IMR-90 (cell line): ENCODE measurements at regions of chr6 and their contacts with region 1.

Region 1: DNA sequence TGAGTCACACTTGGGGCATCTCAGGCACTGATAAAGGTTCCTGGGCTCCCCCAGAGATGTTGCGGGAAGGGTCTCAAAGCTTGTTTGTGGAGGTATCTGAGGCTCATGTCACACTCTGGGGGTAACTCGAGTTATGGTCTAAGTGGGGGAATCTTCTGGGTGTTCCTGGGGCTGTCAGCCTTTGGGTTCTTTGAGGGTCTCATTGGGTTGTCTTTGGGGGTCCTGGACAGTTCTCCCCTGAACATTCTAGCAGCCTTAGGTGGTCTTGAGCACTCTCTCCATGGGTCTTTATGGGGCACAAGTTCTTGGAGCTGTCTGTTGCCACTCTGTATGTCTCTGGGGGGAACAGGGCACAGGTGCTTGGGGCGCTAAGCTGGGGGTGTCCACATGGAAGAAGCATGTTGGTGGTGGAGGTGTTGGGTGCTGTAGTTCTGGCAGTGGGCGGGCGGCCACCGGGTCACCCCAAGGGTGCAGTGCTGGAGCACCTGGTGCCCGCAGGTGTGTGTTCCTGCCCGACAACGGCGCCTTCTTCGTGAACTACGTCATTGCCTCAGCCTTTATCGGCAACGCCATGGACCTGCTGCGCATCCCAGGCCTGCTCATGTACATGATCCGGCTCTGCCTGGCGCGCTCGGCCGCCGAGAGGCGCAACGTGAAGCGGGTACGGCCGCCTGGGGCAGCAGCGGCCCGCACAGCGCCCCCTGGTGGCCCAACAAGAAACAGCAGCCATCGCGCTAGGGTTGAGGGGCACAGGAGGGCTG is 7.1 kb upstream of the CAPN11 start:
- DNase-seq: peak; percentile 62
- ATAC-seq: peak; percentile 94
- H3K4me3 ChIP-seq: no peak overlapping the region
- H3K27ac ChIP-seq: no peak overlapping the region
- H3K4me1 ChIP-seq: peaks cover 2% of the 10 kb centered on the region
- H3K27me3 ChIP-seq: no peaks in the 10 kb centered on the region
- CTCF ChIP-seq: peak; percentile 98
- POLR2A ChIP-seq: no peak
- RAD21 ChIP-seq: peak; percentile 84

Region 2: DNA sequence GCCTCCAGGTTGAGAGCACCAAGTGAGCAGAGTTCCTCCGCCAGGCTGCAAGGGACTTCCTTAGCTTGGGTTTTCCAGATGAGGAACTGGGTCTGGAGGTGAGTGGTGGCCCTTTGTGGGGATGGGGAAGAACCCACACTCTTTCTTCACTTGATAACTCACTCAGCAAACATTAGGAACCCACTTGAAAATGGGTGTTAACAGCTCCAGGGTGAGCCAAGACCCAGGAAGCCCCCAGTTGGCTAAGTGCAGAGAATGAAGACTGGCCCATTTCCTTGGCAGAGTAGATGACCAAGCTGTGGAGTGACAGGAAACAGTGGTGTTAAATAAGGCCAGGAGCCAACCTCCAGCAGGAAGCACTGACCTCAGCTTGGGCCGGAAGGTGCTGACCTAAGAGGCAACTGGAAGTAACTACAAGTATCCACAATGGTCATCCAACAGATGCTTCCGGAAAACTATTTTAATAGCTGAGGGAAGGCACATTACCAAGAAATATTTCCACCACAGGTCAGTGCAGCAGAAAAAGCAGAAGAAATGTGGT is 47.0 kb before region 1 on chr6:
- CTCF ChIA-PET with region 1: no interaction called
- POLR2A ChIA-PET with region 1: no interaction called
- dilution Hi-C with region 1: no loop called
- in situ Hi-C with region 1: no loop called
- intact Hi-C with region 1: no loop called
- DNase-seq: no peak
- ATAC-seq: no peak
- H3K4me3 ChIP-seq: no peak overlapping the region
- H3K27ac ChIP-seq: no peak overlapping the region
- H3K4me1 ChIP-seq: peaks cover 14% of the 10 kb centered on the region
- H3K27me3 ChIP-seq: no peaks in the 10 kb centered on the region
- CTCF ChIP-seq: no peak
- POLR2A ChIP-seq: no peak
- RAD21 ChIP-seq: no peak

Region 3: DNA sequence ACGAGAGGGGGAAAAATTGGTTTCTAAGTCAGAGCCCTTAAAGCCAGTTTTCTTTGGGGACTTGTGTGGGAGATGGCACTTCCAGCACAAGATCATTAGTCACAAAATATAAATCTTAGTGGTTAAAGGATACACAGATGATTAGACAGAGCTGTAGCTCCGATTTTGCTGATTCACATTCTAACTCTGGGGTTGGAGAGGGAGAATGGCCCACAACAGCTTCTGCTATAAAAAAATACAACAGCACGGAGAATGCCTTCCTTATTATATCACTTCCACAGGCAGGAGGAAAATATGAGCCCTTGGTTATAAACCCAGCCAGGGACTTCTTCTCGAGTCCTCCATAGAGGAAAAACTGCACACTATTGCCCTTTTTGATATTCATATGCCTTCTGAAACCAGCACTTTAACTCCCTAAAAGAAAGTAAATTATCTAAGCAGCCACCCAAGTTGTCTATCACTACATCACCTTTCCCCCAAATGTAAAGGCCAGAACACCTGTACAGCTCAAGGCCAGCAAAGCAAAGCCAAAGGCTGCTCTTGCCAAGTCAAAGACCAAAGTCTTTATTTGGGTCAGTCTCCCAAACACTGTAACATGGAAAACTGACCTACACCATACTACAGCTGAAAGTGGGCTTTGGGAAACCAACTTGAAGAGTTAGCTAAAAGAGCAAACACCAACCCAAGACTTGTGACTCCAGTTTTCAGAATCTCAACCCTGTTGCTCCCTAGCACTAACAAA is 34.7 kb before region 1 on chr6:
- CTCF ChIA-PET with region 1: interaction called, 3 read pairs
- POLR2A ChIA-PET with region 1: no interaction called
- dilution Hi-C with region 1: no loop called
- in situ Hi-C with region 1: no loop called
- intact Hi-C with region 1: loop called (anchors 1 kb)
- DNase-seq: peak; percentile 93
- ATAC-seq: peak; percentile 84
- H3K4me3 ChIP-seq: peak overlapping the region; percentile 14; the same call in 1 of the 2 replicates
- H3K27ac ChIP-seq: peak overlapping the region; percentile 89
- H3K4me1 ChIP-seq: peaks cover 39% of the 10 kb centered on the region
- H3K27me3 ChIP-seq: no peaks in the 10 kb centered on the region
- CTCF ChIP-seq: no peak
- POLR2A ChIP-seq: no peak
- RAD21 ChIP-seq: no peak